ENCODE measurements at regions of chr12 and their contacts with region 1.

Region 1: GRCh38 chr12:117202556-117202955 is 12.3 kb upstream of the FBXO21 start:
- DNase-seq: no peak
- H3K4me3 ChIP-seq: no peak overlapping the region
- H3K27ac ChIP-seq: no peak overlapping the region
- H3K4me1 ChIP-seq: no peaks in the 10 kb centered on the region
- H3K27me3 ChIP-seq: no peaks in the 10 kb centered on the region
- CTCF ChIP-seq: no peak

Region 2: DNA sequence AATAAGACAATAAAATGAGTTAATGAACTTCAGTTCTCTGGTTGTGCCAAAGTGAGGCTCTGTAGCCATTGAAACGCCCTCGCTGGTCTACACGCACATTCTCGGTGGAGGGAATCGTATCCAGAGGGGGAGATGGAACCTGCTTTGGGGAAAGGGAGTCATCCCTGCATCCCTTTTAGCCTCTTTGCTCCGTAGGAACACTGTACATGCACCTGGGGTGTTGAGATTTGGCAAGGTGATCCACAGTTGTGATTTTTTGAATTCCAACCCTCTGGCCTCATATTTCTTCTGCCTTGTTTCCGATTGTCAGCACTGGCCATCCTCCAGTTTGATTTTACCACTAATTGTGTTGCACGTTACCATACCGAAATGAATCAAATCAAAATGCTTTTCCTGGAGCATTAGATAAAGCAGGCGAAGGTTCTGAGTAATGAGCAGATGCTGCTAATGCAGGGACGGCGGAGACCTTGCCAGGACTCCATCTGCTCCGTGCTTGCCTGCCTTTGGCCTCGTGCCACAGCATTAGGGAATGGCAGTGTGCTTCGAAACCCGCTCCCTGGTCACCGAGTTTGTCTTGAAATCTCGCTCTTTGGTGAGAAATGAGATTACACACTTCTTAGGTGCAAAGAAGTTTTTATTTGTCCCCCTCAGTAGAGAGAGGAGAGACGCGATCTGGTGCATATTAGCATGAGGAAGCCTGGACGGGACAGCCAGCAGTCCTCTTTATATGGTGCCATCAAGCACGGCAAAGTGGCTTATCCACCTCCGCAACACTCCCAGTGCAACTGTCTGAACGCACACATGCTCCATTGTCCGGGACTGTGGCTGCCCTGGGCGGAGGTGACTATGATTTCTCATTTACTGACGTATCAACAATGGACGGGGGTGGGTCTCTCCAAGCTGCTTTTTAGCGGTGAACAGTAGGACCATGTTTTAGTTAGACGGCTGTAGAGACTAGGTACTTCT is 232.7 kb before region 1 on chr12:
- CTCF ChIA-PET with region 1: no interaction called
- POLR2A ChIA-PET with region 1: interaction called, 13 read pairs
- intact Hi-C with region 1: no loop called
- DNase-seq: no peak
- H3K4me3 ChIP-seq: no peak overlapping the region
- H3K27ac ChIP-seq: no peak overlapping the region
- H3K4me1 ChIP-seq: no peaks in the 10 kb centered on the region
- H3K27me3 ChIP-seq: no peaks in the 10 kb centered on the region
- CTCF ChIP-seq: no peak

Region 3: DNA sequence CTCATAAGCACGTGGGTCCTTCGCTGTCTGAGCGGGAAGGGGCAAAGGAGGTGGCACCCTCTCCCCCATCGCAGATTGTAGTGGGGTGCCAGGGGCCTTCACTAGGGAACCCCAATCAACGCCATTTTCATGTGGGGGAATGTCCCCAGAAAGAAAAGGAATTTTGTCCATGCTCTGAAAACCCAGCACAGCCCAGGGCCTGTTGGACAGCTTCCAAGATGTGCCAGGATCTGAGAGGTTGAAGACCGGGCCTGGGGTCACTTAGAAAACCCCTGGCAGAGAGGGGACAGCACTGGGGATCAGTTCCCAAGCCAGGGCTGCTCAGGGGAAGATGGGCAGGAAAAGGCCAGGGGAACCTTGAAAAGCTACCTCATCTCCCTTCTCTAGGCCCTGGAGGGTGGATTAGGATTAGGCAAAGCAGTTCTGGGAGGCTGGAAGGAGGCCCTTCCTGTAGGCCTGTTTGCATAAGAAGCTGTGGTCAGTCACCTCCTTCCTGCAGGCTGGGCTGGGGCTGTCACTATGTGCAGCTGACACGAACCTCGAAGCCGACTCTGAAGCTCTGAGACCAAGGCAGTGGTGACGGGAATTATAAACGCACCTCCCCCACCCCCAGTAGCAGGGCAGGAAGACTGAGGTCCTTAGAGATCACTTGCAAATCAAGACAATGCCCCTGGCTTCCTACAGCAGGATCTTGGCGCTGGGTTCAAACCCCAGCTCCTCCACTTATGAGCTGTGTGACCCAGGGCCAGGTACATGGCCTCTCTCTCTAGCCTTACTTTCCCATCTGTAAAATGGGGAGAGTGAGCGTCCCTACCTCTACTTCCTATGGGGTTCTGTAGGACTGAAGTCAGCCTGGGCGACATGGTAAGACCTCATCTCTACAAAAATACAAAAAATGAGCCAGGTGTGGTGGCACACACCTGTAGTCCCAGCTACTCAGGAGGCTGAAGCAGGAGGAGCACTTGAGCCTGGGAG is 132.3 kb before region 1 on chr12:
- CTCF ChIA-PET with region 1: no interaction called
- POLR2A ChIA-PET with region 1: no interaction called
- intact Hi-C with region 1: no loop called
- DNase-seq: no peak
- H3K4me3 ChIP-seq: no peak overlapping the region
- H3K27ac ChIP-seq: no peak overlapping the region
- H3K4me1 ChIP-seq: no peaks in the 10 kb centered on the region
- H3K27me3 ChIP-seq: peaks cover 6% of the 10 kb centered on the region
- CTCF ChIP-seq: no peak

Region 4: GRCh38 chr12:117100251-117100650 is 102.3 kb before region 1 on chr12:
- CTCF ChIA-PET with region 1: no interaction called
- POLR2A ChIA-PET with region 1: no interaction called
- intact Hi-C with region 1: no loop called
- DNase-seq: no peak
- H3K4me3 ChIP-seq: no peak overlapping the region
- H3K27ac ChIP-seq: no peak overlapping the region
- H3K4me1 ChIP-seq: peaks cover 10% of the 10 kb centered on the region
- H3K27me3 ChIP-seq: peaks cover 66% of the 10 kb centered on the region
- CTCF ChIP-seq: 0 out of 2 replicates have a peak, but pooled peaks have one; percentile 16

Region 5: DNA sequence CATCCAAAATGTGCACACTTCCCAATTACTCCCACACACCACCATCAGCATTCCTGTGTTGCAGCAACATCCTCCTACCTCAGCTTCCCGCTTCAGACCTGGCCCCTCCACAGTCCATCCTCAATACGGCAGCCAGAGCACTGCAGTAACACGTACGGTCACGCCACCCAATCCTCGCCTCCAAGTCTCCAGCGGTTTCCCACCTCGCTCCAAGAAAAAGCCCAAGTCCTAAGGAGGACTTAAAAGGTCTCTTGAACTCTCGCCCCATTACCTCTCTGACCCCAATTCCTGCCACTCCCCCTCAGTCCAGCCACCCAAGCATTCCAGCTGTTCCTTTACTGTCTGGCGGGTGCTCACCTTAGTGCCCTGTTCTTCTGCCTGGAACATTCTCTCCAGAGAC is 24.3 kb before region 1 on chr12:
- CTCF ChIA-PET with region 1: no interaction called
- POLR2A ChIA-PET with region 1: no interaction called
- intact Hi-C with region 1: no loop called
- DNase-seq: no peak
- H3K4me3 ChIP-seq: no peak overlapping the region
- H3K27ac ChIP-seq: no peak overlapping the region
- H3K4me1 ChIP-seq: no peaks in the 10 kb centered on the region
- H3K27me3 ChIP-seq: no peaks in the 10 kb centered on the region
- CTCF ChIP-seq: no peak

Region 6: DNA sequence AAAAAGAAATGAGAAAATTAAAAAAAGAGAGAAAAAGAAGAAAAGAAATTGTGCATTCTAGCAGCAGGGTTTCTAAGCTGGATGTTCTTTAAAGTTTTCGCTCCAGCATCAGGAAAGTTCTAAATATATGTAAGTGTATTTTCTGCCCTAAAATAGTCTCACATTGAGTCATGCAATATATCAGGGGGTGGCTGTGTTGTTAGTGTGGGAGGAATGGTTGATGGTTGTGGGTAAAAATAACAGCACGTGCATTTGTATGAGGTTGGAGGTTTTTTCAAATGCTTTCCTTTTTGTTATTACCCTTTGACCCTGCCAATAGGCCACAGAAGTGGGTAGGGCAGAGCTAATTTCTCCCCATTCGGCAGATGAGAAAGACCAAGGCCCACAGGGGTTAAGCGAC is 52.8 kb after region 1 on chr12:
- CTCF ChIA-PET with region 1: no interaction called
- POLR2A ChIA-PET with region 1: no interaction called
- intact Hi-C with region 1: no loop called
- DNase-seq: no peak
- H3K4me3 ChIP-seq: no peak overlapping the region
- H3K27ac ChIP-seq: no peak overlapping the region
- H3K4me1 ChIP-seq: no peaks in the 10 kb centered on the region
- H3K27me3 ChIP-seq: no peaks in the 10 kb centered on the region
- CTCF ChIP-seq: no peak